Endothelial cell of umbilical vein (primary cell): ENCODE measurements at regions of chr12 and their contacts with region 1.

Region 1: GRCh38 chr12:80902711-80903110 is 35.0 kb downstream of the LIN7A start:
- DNase-seq: no peak
- H3K4me3 ChIP-seq: no peak overlapping the region
- H3K27ac ChIP-seq: no peak overlapping the region
- H3K4me1 ChIP-seq: no peaks in the 10 kb centered on the region
- H3K27me3 ChIP-seq: no peaks in the 10 kb centered on the region
- CTCF ChIP-seq: no peak
- POLR2A ChIP-seq: no peak

Region 2: GRCh38 chr12:79826267-79827128 is 1076.2 kb before region 1 on chr12:
- CTCF ChIA-PET with region 1: no interaction called
- POLR2A ChIA-PET with region 1: no interaction called
- dilution Hi-C with region 1: no loop called
- intact Hi-C with region 1: no loop called
- DNase-seq: no peak
- H3K4me3 ChIP-seq: no peak overlapping the region
- H3K27ac ChIP-seq: no peak overlapping the region
- H3K4me1 ChIP-seq: no peaks in the 10 kb centered on the region
- H3K27me3 ChIP-seq: no peaks in the 10 kb centered on the region
- CTCF ChIP-seq: no peak
- POLR2A ChIP-seq: no peak

Region 3: DNA sequence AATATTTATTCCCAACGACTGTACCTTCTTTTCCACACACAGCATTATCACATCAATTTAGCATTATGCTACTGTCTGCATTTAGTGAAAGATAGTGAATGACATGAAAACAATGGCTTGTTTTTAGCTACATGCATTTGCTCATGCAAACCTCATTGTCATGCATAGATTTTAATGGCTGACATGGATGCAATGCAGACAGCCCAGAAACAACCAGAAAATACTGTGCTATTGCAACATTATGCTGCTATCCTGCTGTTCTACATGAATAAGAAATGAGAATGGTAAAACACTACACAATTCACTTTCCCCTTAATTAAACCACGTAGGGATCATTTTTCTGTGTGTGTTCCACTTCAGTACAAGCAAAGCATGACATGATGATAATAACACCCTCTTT is 55.8 kb before region 1 on chr12:
- CTCF ChIA-PET with region 1: no interaction called
- POLR2A ChIA-PET with region 1: no interaction called
- dilution Hi-C with region 1: no loop called
- intact Hi-C with region 1: no loop called
- DNase-seq: no peak
- H3K4me3 ChIP-seq: no peak overlapping the region
- H3K27ac ChIP-seq: no peak overlapping the region
- H3K4me1 ChIP-seq: no peaks in the 10 kb centered on the region
- H3K27me3 ChIP-seq: no peaks in the 10 kb centered on the region
- CTCF ChIP-seq: no peak
- POLR2A ChIP-seq: no peak

Region 4: GRCh38 chr12:80916256-80916655 is 13.5 kb after region 1 on chr12:
- CTCF ChIA-PET with region 1: interaction called, 10 read pairs
- POLR2A ChIA-PET with region 1: no interaction called
- dilution Hi-C with region 1: no loop called
- intact Hi-C with region 1: no loop called
- DNase-seq: no peak
- H3K4me3 ChIP-seq: no peak overlapping the region
- H3K27ac ChIP-seq: no peak overlapping the region
- H3K4me1 ChIP-seq: no peaks in the 10 kb centered on the region
- H3K27me3 ChIP-seq: no peaks in the 10 kb centered on the region
- CTCF ChIP-seq: no peak
- POLR2A ChIP-seq: no peak